ENCODE measurements at regions of chr20 and their contacts with region 1.

Region 1: DNA sequence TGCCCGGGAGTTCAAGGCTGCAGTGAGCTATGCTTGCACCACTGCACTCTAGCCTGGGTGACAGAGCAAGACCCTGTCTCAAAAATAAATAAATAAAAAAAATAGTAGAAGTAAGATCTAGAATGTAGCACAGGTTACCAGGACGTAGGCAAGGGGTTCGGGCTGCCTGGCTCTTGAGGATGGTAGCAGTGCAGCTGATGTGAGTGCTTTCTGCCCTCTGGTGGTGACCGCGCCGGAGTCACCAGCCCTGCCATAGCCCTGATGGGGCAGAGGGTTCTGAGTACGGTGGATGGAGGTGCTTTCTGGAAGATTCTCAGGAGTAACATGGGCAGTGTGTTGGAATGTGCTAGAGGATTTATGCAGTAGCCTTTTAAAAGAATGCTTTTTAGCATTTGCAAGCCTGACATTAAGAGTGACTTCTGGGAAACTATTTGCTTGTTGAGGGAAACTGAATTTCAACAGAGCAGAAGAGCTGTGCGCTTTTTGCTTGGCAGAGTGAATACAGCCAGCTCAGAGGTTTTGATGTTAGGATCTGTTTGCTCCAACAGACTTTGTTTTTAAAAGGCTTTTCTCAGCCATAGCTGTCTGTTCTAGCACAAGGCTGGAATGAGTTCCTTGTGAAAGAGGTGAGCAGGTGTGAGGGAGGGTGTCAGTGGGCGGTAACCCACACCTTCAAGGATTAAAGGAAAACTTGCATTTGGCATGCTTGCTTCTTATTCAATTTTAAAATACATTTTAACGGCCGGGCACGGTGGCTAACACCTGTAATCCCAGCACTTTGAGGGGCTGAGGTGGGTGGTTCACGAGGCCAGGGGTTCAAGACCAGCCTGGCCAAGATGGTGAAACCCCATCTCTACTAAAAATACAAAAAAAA is 65.9 kb downstream of the PTPN1 start:
- DNase-seq: peak in 1 of 2 experiments; percentile 74
- H3K4me3 ChIP-seq: no peak overlapping the region
- H3K27ac ChIP-seq: no peak overlapping the region
- H3K4me1 ChIP-seq: no peaks in the 10 kb centered on the region
- H3K27me3 ChIP-seq: no peaks in the 10 kb centered on the region
- CTCF ChIP-seq: peak; percentile 79 to 95 (median 90)
- EP300 ChIP-seq: no peak
- POLR2A ChIP-seq: no peak
- RAD21 ChIP-seq: peak; percentile 75 to 82

Region 2: DNA sequence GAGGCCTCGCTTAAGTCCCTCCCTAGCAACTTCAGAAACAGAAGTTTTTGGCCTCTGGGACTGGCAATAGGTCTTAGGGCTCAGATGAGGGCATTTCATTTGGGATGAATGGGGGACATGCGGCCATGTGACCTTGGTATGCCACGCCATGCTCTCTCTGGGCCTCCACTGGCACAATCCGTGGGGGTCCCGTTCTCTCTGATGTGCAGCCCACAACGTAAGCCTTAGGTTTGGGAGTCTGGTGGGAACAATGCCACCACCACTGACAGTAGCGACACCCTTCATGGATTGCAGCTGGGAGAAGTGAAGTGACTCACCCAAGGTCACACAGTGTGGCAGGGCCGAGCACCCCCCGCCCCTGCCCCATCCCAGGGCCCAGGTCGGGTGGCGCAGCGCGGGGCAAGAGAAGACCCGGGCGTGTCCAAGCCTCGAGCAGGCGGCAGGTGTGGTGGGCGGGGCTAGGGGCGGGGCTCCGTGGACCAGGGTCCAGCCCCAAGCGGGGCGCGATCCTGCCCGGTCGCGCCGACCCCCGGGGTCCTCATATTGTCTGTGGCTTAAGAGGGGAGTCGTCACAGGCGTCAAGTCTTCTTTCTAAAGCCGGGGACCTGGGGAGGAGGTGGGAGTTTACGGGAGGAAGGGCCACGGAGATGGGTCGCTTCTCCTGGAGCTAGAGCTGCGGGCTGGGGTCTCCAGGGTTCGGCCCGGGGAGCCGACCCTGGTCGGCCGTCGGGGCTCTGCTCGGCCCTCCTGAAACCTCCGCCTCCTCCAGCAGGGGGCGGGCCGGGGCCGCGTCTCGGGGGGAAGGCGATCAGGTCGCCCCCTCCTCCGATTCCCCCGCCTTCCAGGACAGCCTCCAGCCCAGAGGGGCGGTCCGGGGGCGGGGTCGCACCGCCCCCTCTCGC is 386.2 kb before region 1 on chr20:
- CTCF ChIA-PET with region 1: interaction called, 11 read pairs
- POLR2A ChIA-PET with region 1: no interaction called
- DNase-seq: peak in 1 of 2 experiments; percentile 98
- H3K4me3 ChIP-seq: peak overlapping the region; percentile 44 to 95 (median 68)
- H3K27ac ChIP-seq: no peak overlapping the region
- H3K4me1 ChIP-seq: peaks cover 0 to 34% (median 20%) of the 10 kb centered on the region in 4 experiments; a peak in 6 of 7 replicates
- H3K27me3 ChIP-seq: peaks cover 0 to 2% (median 0%) of the 10 kb centered on the region in 4 experiments; a peak in 1 of 7 replicates
- CTCF ChIP-seq: peak; percentile 66 to 82 (median 73)
- EP300 ChIP-seq: no peak; a peak in 1 of 3 replicates
- POLR2A ChIP-seq: no peak
- RAD21 ChIP-seq: peak; percentile 83 to 86

Region 3: DNA sequence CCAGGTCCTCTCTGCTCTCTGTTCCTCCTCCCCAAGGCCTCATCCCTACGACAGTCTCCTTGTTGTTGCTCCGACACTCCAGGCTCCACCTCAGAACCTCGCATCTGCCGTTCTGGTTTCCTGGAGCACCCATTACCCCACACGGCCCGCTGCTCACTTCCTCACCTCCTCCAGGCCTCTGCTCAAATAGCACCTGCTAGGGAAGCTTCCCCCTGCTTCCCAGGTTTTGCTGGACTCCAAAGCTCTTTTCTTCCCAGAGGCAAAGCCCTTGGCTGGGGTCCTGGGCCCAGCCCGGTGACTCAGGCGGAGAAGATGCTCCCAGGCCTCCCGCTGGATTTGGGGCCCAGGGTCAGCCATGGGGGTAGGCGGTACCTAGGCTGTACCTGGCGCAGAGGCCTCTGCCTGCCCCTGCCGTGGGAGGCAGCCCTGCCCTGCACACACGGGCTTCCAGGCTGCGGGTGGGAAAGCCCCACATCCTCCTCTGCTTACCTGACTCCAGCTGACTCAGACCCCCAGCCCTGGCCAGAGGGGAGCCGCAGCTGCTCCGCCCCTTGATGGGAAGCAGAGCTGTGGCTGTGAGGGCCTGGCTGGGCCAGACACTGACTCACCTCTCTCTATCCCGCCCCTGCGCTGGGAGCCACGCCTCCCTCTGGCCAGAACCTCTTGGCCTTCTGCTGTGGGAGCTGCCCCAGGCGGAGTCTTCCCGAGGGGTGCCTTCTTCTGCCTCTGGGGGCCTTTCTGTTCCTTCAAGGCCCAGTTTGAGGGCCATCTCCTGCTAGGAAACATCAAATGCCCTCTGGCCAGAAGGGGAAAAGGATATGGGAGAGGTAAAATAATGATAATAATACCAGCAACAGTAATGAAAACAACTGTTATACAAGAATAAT is 254.9 kb before region 1 on chr20:
- CTCF ChIA-PET with region 1: no interaction called
- POLR2A ChIA-PET with region 1: no interaction called
- DNase-seq: peak; percentile 59 to 90
- H3K4me3 ChIP-seq: no peak overlapping the region
- H3K27ac ChIP-seq: no peak overlapping the region
- H3K4me1 ChIP-seq: peaks cover 0 to 12% (median 7%) of the 10 kb centered on the region in 4 experiments; a peak in 5 of 7 replicates
- H3K27me3 ChIP-seq: no peaks in the 10 kb centered on the region
- CTCF ChIP-seq: no peak
- EP300 ChIP-seq: no peak
- POLR2A ChIP-seq: no peak; a peak in 1 of 3 replicates
- RAD21 ChIP-seq: no peak; a peak in 1 of 4 replicates

Region 4: GRCh38 chr20:50478162-50479036 is 97.7 kb before region 1 on chr20:
- CTCF ChIA-PET with region 1: interaction called, 36 read pairs
- POLR2A ChIA-PET with region 1: no interaction called
- DNase-seq: peak in 1 of 2 experiments; percentile 79
- H3K4me3 ChIP-seq: no peak overlapping the region
- H3K27ac ChIP-seq: no peak overlapping the region
- H3K4me1 ChIP-seq: no peaks in the 10 kb centered on the region
- H3K27me3 ChIP-seq: no peaks in the 10 kb centered on the region
- CTCF ChIP-seq: peak; percentile 83 to 90 (median 89)
- EP300 ChIP-seq: no peak
- POLR2A ChIP-seq: no peak
- RAD21 ChIP-seq: peak; percentile 52 to 76

Region 5: DNA sequence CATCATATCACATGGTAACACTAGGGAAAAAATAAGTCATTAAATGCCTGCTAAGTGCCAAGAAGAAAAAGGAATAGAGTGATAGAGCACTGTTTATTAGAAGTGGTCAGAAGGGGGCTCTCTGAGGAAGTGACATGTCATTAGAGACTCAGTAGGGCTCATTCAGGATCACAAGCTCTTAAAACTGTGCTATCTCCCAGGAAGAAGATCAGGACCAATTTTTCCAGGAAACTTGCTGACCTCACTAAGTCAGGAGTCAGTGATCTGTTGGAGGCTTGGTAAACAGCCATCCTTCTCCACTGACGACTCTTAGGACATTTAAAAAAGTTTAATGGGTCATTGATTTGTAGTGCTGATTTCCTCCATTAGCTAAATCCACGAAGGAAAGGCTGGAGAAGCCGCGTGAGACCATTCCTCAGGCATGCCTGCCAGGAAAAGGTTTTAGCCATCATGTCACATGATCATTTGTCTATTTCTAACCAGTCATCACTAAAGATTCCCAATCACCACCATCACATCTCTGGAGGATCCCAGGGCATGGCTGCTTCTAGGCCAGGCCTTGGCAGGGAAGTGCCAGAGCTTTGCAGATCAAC is 71.8 kb before region 1 on chr20:
- CTCF ChIA-PET with region 1: interaction called, 60 read pairs
- POLR2A ChIA-PET with region 1: no interaction called
- DNase-seq: no peak
- H3K4me3 ChIP-seq: no peak overlapping the region
- H3K27ac ChIP-seq: no peak overlapping the region
- H3K4me1 ChIP-seq: peaks cover 0 to 2% (median 0%) of the 10 kb centered on the region in 4 experiments; a peak in 1 of 7 replicates
- H3K27me3 ChIP-seq: no peaks in the 10 kb centered on the region
- CTCF ChIP-seq: no peak; a peak in 1 of 4 replicates
- EP300 ChIP-seq: no peak
- POLR2A ChIP-seq: no peak
- RAD21 ChIP-seq: peak; percentile 10 to 31; a peak in 3 of 4 replicates

Region 6: DNA sequence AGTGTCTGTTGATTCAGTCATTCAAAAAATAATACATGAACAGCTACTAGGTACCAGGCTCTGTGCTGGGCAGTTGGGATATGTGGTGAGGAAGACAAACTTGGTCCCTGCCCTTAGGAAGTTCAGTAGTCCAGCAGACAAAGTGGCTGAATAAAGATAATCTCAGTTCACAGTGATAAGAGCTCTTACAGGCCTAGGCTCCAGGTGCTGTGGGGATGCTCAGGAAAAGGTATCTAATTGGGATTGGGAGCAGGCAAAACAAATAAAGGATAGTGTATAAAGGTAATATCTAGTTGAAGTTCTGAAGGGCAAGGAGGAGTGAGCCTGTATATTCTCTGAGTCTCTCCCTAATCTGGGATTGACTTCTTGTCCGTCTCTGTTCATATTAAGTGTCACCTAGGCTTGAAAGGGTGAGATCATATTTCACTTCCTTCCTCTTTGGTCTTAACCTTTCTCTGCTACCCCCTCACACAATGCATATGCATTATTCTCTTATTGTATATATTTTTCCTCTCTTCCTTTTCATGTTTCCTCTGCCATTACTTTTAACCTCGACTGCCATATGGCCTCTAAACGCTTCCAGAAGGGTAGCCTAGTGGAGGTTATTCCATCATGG is 52.4 kb before region 1 on chr20:
- CTCF ChIA-PET with region 1: interaction called, 15 read pairs
- POLR2A ChIA-PET with region 1: no interaction called
- DNase-seq: no peak
- H3K4me3 ChIP-seq: no peak overlapping the region
- H3K27ac ChIP-seq: no peak overlapping the region
- H3K4me1 ChIP-seq: peaks cover 0 to 6% (median 4%) of the 10 kb centered on the region in 4 experiments; a peak in 3 of 7 replicates
- H3K27me3 ChIP-seq: no peaks in the 10 kb centered on the region
- CTCF ChIP-seq: no peak
- EP300 ChIP-seq: no peak
- POLR2A ChIP-seq: no peak
- RAD21 ChIP-seq: no peak